ENCODE measurements at regions of chr22 and their contacts with region 1.

Region 1: DNA sequence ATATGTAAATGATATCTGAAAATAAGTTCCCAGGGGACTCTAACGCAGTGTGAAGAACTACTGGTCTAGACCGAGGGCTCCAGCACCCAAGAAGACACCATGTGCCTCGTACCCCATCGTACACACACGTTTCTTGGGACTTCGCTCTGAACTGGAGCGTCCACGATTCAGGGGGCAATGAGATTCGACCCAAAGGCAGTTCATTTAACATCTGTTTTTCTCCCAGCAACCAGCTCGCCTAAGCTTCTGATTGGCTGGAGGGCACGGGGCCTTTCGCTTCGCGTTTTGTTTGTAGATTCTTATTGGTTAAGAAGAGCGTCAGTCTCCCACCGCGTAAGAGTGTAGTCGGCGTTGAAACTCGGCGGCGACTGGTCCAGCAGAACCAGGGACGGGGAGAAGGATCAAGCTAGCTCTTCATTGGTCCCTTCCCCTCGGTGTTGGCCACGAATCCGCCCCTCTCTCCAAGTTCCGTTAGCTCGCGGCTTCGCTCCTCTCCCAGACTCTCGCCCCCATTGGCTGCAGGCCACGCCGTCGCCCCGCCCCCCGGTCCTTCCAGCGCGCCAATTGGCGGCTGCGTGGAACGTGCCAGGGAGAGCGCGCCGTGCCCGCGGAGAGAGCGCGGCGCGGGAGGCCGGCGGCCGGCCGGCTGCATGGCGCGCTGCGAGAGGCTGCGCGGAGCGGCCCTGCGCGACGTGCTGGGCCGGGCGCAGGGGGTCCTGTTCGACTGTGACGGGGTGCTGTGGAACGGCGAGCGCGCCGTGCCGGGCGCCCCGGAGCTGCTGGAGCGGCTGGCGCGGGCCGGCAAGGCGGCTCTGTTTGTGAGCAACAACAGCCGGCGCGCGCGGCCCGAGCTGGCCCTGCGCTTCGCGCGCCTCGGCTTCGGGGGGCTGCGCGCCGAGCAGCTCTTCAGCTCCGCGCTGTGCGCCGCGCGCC is at the start of gene PDXP:
- DNase-seq: peak; percentile 96
- ATAC-seq: peak; percentile 92
- H3K4me3 Mint-ChIP-seq: peak within 1 kb of the TSS; percentile 93
- H3K27ac Mint-ChIP-seq: peak within 1 kb of the TSS; percentile 99
- H3K4me1 Mint-ChIP-seq: peaks cover 47% of the 10 kb centered on the region
- H3K27me3 Mint-ChIP-seq: no peaks in the 10 kb centered on the region
- CTCF ChIP-seq: no peak
- total RNA-seq, gene PDXP: 17.7 and 22.6 TPM in 2 replicates

Region 2: DNA sequence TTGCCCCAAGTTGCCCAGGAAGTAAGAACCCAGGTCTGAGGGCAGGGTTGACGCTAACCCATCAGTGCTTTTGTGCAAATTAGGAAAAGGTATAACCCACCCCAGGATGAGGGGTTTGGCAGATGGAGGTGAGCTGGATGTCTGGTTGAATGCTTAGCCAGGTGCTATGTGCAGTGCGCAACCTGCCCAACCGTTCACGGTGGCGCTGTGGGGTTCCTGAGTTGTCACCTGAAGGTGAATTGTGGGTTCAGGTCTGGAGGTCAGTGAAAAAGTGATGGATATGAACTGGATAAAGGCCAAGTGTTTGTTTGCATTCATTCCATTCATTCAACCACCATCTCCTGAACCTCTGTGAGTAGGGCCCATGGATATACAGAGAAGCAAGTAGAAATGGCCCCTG is 64.2 kb before region 1 on chr22:
- CTCF ChIA-PET with region 1: no interaction called
- POLR2A ChIA-PET with region 1: interaction called, 15 read pairs
- intact Hi-C with region 1: no loop called
- DNase-seq: no peak
- ATAC-seq: no peak
- H3K4me3 Mint-ChIP-seq: no peak overlapping the region
- H3K27ac Mint-ChIP-seq: no peak overlapping the region
- H3K4me1 Mint-ChIP-seq: peaks cover 11% of the 10 kb centered on the region
- H3K27me3 Mint-ChIP-seq: no peaks in the 10 kb centered on the region
- CTCF ChIP-seq: no peak

Region 3: GRCh38 chr22:37633625-37634416 is 24.6 kb before region 1 on chr22:
- CTCF ChIA-PET with region 1: interaction called, 4 read pairs
- POLR2A ChIA-PET with region 1: interaction called, 50 read pairs
- intact Hi-C with region 1: loop called (anchors 1 kb)
- DNase-seq: peak; percentile 69
- ATAC-seq: peak; percentile 78
- H3K4me3 Mint-ChIP-seq: peak overlapping the region; percentile 74
- H3K27ac Mint-ChIP-seq: peak overlapping the region; percentile 93
- H3K4me1 Mint-ChIP-seq: peaks cover 67% of the 10 kb centered on the region
- H3K27me3 Mint-ChIP-seq: no peaks in the 10 kb centered on the region
- CTCF ChIP-seq: no peak

Region 4: DNA sequence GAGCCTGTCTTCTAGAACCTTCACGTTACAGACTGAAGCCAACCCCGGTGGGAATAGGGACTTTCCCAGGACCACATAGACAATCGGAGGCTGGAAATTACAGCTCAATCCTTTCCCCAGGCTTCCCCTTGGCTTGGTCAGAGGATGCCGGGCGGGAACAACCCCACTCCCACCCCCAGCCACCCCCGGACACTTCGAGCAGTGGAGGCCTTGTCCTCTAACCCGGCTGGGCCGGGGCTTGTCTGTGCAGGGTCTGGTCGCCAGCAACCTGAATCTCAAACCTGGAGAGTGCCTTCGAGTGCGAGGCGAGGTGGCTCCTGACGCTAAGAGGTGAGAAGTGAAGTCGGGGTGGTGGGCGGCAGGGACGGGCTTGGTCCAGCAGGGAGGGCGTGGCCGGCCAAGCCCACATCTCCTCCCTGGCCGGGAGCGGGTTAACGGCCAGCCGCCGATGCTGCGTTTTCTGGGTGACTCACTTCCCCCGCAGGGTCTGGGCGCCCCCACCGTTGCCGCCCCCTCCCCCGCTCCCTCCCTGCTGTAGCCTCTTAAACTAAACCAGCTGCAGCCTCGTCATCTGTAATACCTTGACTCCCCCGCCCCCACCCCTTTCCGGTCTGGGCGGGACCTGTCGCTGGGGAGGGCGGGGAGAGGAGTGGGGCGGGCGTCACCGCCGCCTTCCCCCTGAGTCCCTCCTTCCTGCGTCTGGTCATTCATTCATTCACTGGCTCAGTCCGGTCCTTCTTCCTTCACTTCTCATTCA is 18.5 kb after region 1 on chr22:
- CTCF ChIA-PET with region 1: interaction called, 107 read pairs
- POLR2A ChIA-PET with region 1: interaction called, 181 read pairs
- intact Hi-C with region 1: loop called (anchors 1 kb)
- DNase-seq: peak; percentile 86
- ATAC-seq: peak; percentile 83
- H3K4me3 Mint-ChIP-seq: peak overlapping the region; percentile 84
- H3K27ac Mint-ChIP-seq: peak overlapping the region; percentile 91
- H3K4me1 Mint-ChIP-seq: peaks cover 66% of the 10 kb centered on the region
- H3K27me3 Mint-ChIP-seq: no peaks in the 10 kb centered on the region
- CTCF ChIP-seq: no peak

Region 5: GRCh38 chr22:37843741-37843990 is 185.3 kb after region 1 on chr22:
- CTCF ChIA-PET with region 1: no interaction called
- POLR2A ChIA-PET with region 1: interaction called, 12 read pairs
- intact Hi-C with region 1: no loop called
- DNase-seq: no peak
- ATAC-seq: peak; percentile 23
- H3K4me3 Mint-ChIP-seq: peak overlapping the region; percentile 89
- H3K27ac Mint-ChIP-seq: peak overlapping the region; percentile 85
- H3K4me1 Mint-ChIP-seq: peaks cover 25% of the 10 kb centered on the region
- H3K27me3 Mint-ChIP-seq: no peaks in the 10 kb centered on the region
- CTCF ChIP-seq: no peak

Measured in activated B cell treated with CpG ODN at 0.5 μM for 24 hours (primary cell).